Dorsolateral prefrontal cortex (tissue), 120 donors: ENCODE measurements at regions of chr6 and their contacts with region 1.

Region 1: DNA sequence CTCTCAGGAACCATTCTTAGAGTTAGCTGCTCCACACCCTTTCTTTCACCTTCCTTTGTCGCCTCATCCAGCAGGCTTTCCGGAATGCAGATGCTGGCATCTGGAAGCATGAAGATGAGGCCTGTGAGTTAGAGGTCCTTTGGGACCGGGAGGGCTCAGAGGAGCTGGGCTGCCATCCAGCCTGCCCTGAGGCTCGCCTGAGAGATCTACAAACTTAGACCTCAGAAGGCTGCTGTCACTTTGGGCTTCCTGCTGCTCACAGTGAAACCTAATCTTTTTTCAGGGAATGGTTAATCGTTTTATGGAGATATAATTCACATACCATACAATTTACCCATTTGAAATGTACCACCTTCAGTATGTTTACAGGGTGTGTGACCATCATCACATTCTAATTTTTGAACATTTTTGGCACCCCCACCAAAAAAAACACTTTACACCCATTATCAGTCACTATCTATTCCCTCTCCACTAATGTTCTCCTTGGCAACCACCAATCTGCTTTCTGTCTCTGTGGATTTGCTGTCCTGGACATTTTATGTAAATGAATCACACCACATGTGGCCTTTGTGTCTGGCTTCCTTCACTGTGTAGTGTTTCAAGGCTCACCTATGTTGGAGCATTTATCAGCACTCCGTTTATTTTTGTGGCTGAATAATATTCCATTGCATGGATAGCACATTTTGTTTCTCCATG is 20.0 kb upstream of the MPC1 start:
- DNase-seq: peak in 1 of 10 donors; percentile 1
- H3K4me3 ChIP-seq: no peak overlapping the region
- H3K27ac ChIP-seq: no peak overlapping the region
- H3K27me3 ChIP-seq: no peaks in the 10 kb centered on the region
- CTCF ChIP-seq: no peak

Region 2: DNA sequence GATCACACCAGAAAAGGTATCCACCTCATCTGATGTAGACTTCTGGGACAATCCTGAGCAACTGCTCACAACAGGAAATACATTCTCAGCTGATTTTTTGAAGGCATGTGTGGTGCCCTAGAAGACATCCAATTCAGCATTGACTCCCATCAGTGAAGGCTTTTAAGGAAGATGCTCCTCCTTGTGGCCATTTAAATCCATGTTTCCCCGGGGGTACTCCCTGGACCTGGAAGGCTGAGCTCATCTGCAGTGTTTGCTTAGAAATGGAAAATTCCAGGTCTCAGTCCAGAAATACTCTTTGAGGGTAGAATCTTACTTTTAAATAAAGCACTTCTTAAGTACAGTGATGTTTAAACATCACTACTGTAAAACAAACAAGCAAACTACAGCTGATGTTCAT is 544.1 kb before region 1 on chr6:
- intact Hi-C with region 1: no loop called
- DNase-seq: no peak
- H3K4me3 ChIP-seq: no peak overlapping the region
- H3K27ac ChIP-seq: no peak overlapping the region
- H3K27me3 ChIP-seq: peaks cover 0 to 22% (median 11%) of the 10 kb centered on the region in 45 donors
- CTCF ChIP-seq: peak in 11 of 56 donors; percentile 8 to 25 (median 16)

Region 3: GRCh38 chr6:166308033-166308768 is 94.5 kb before region 1 on chr6 and contains the start of gene PRR18:
- intact Hi-C with region 1: loop called (anchors 2 to 5 kb)
- DNase-seq: peak; percentile 29 to 87 (median 81)
- H3K4me3 ChIP-seq: peak within 1 kb of the TSS; percentile 31 to 80 (median 64)
- H3K27ac ChIP-seq: peak within 1 kb of the TSS; percentile 49 to 100 (median 95)
- H3K27me3 ChIP-seq: peaks cover 0 to 42% (median 20%) of the 10 kb centered on the region in 45 donors
- CTCF ChIP-seq: peak in 42 of 56 donors; percentile 11 to 61 (median 41)
- total RNA-seq, gene PRR18: 7.1 to 260 (median 51.2) TPM

Region 4: DNA sequence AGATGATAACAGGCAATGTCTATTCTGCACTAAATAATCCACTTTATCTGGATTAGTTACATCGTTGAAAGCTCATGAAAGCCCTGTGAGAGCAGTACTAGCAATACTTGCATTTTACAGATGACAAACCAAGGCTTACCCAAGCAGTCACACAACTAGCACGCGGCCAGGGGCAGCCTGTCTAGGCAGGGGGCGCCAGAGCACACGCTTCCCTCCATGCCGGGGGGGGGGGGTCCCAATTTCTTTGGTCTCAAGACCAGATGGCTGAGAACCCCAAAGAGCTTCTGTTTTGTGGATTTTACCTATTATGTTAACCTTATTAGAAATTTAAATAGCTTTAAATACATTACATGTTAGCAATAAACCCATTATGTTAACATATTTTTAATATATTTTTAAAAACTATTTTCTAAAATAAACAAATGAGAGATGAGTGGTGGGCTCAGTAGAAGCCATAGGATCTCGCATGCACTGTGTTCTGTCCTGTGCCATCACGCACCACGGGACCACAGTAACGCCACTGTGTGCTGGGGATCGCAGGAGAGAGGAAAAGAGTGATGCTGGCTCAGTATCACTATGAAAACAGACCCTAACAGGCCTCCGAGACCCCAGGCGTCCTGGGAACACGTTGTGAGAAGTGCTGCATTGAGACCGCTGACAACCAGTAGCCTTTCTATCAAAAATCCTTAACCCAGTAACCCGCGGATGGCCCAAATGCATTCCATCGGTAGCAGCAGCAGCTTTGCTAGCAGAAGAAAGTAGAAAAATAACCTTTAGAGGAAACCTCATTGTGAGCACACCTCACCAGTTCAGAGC is 89.3 kb before region 1 on chr6:
- intact Hi-C with region 1: loop called (anchors 2 to 5 kb)
- DNase-seq: peak in 1 of 10 donors; percentile 65
- H3K4me3 ChIP-seq: no peak overlapping the region
- H3K27ac ChIP-seq: peak overlapping the region in 6 of 59 donors; percentile 11 to 48 (median 21)
- H3K27me3 ChIP-seq: peaks cover 0 to 4% (median 0%) of the 10 kb centered on the region in 45 donors
- CTCF ChIP-seq: peak in 55 of 56 donors; percentile 55 to 89 (median 73)